CD4-positive, alpha-beta T cell (primary cell): ENCODE measurements at regions of chr18 and their contacts with region 1.

Region 1: GRCh38 chr18:47870605-47871004 is 59.9 kb downstream of the SMAD2 start:
- DNase-seq: peak in 1 of 14 experiments; percentile 10
- ATAC-seq: peak; percentile 44
- H3K4me3 ChIP-seq: no peak overlapping the region
- H3K4me3 Mint-ChIP-seq: no peak overlapping the region
- H3K27ac ChIP-seq: no peak overlapping the region
- H3K27ac Mint-ChIP-seq: peak overlapping the region; percentile 62
- H3K4me1 ChIP-seq: peaks cover 3% of the 10 kb centered on the region
- H3K4me1 Mint-ChIP-seq: peaks cover 43% of the 10 kb centered on the region
- H3K27me3 ChIP-seq: no peaks in the 10 kb centered on the region
- H3K27me3 Mint-ChIP-seq: no peaks in the 10 kb centered on the region
- CTCF ChIP-seq: no peak

Region 2: DNA sequence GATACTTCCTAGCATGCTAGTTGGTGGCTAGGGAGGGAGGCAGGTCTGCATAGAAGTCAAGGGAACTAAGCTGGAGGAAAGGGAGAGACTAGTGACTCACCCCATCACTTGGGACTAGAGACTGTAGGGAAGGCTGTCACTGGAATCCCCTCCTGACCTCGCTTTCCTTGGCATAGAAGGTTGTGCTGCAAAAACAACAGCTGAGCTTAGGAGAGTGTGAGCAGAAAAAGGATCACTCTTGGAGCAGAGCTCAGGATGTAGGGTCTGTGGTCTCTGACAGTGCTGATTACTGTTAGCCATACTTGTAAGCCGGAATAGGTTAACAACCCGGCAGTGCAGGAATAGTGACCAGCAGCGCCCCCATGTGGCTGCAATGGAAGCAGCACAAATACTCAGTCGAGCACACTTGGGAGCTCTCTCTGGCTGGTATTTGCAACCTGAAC is 126.8 kb after region 1 on chr18:
- CTCF ChIA-PET with region 1: interaction called, 4 read pairs
- POLR2A ChIA-PET with region 1: no interaction called
- intact Hi-C with region 1: loop called in 1 of 2 experiments (anchors 10 kb)
- DNase-seq: peak in 8 of 14 experiments; percentile 5 to 42 (median 19)
- ATAC-seq: no peak
- H3K4me3 ChIP-seq: no peak overlapping the region
- H3K4me3 Mint-ChIP-seq: no peak overlapping the region
- H3K27ac ChIP-seq: no peak overlapping the region
- H3K27ac Mint-ChIP-seq: no peak overlapping the region
- H3K4me1 ChIP-seq: no peaks in the 10 kb centered on the region
- H3K4me1 Mint-ChIP-seq: no peaks in the 10 kb centered on the region
- H3K27me3 ChIP-seq: peaks cover 0 to 2% of the 10 kb centered on the region in 2 experiments
- H3K27me3 Mint-ChIP-seq: no peaks in the 10 kb centered on the region
- CTCF ChIP-seq: no peak